GM12878 (cell line): ENCODE measurements at regions of chr10 and their contacts with region 1.

Region 1: DNA sequence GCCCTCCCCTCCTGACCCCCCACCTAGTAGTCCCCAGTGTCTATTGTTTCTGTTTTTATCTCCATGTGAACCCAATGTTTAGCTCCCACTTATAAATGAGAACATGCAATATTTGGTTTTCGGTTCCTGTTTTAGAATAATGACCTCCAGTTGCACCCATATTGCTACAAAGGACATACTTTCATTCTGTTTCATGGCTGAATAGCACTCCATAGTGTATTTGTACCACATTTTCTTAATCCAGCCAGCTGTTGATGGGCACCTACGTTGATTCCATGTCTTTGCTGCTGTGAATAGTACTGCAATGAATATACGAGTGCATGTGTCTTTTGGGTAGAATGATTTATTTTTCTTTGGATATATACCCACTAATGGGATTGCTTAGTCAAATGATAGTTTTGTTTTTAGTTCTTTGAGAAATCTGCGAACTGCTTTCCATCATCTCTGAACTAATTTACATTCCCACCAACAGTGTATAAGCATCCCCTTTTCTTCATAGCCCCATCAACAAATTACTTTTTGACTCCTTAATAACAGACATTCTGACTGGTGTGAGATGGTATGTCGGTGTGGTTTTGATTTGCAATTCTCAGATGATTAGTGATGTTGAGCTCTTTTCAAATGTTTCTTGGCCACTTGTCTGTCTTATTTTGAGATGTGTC is 128.4 kb upstream of the PHYHIPL start:
- DNase-seq: peak; percentile 84
- ATAC-seq: peak; percentile 90
- H3K4me3 ChIP-seq: peak overlapping the region; percentile 33; the same call in 1 of the 2 replicates
- H3K27ac ChIP-seq: peak overlapping the region; percentile 65
- H3K4me1 ChIP-seq: peaks cover 15% of the 10 kb centered on the region
- H3K27me3 ChIP-seq: no peaks in the 10 kb centered on the region; a peak in 1 of 4 replicates
- CTCF ChIP-seq: no peak
- EP300 ChIP-seq: peak; percentile 68 to 97
- POLR2A ChIP-seq: no peak
- RAD21 ChIP-seq: peak; percentile 27; the same call in 1 of the 2 replicates

Region 2: DNA sequence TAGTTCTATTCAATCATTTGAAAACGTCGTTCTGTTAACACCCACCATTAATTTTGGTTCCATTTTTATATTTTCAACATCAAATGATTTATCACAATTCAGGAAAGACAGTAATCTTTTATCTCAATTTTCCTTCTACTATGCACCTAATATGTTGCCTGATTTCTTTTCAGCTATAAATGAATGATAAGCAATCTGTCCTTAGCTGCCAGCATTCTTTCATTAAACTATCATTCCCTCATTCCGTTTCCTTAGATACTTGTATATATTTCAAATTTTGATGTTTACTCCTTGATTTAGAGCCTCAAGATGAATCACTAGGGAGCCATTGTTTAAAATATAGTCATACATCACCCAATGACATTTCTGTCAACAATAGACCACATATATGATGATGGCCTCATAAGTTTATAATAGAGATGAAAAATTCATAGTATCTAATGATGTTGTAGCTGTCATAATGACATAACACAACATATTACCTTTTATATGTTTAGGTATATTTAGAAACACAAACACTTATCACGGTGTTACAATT is 1442.1 kb before region 1 on chr10:
- CTCF ChIA-PET with region 1: no interaction called
- POLR2A ChIA-PET with region 1: no interaction called
- RAD21 ChIA-PET with region 1: no interaction called
- SMC1A ChIA-PET with region 1: no interaction called
- in situ Hi-C with region 1: no loop called
- intact Hi-C with region 1: no loop called
- DNase-seq: no peak
- ATAC-seq: no peak
- H3K4me3 ChIP-seq: no peak overlapping the region
- H3K27ac ChIP-seq: no peak overlapping the region
- H3K4me1 ChIP-seq: no peaks in the 10 kb centered on the region
- H3K27me3 ChIP-seq: no peaks in the 10 kb centered on the region
- CTCF ChIP-seq: no peak
- EP300 ChIP-seq: no peak
- POLR2A ChIP-seq: no peak
- RAD21 ChIP-seq: no peak

Region 3: GRCh38 chr10:58967551-58968388 is 80.3 kb before region 1 on chr10:
- CTCF ChIA-PET with region 1: interaction called, 5 read pairs
- POLR2A ChIA-PET with region 1: no interaction called
- RAD21 ChIA-PET with region 1: interaction called, 11 read pairs
- SMC1A ChIA-PET with region 1: interaction called, 14 read pairs
- in situ Hi-C with region 1: no loop called
- intact Hi-C with region 1: loop called (anchors 5 kb)
- DNase-seq: no peak
- ATAC-seq: peak; percentile 88
- H3K4me3 ChIP-seq: no peak overlapping the region
- H3K27ac ChIP-seq: no peak overlapping the region
- H3K4me1 ChIP-seq: no peaks in the 10 kb centered on the region
- H3K27me3 ChIP-seq: no peaks in the 10 kb centered on the region
- CTCF ChIP-seq: no peak
- EP300 ChIP-seq: no peak
- POLR2A ChIP-seq: no peak
- RAD21 ChIP-seq: no peak

Region 4: DNA sequence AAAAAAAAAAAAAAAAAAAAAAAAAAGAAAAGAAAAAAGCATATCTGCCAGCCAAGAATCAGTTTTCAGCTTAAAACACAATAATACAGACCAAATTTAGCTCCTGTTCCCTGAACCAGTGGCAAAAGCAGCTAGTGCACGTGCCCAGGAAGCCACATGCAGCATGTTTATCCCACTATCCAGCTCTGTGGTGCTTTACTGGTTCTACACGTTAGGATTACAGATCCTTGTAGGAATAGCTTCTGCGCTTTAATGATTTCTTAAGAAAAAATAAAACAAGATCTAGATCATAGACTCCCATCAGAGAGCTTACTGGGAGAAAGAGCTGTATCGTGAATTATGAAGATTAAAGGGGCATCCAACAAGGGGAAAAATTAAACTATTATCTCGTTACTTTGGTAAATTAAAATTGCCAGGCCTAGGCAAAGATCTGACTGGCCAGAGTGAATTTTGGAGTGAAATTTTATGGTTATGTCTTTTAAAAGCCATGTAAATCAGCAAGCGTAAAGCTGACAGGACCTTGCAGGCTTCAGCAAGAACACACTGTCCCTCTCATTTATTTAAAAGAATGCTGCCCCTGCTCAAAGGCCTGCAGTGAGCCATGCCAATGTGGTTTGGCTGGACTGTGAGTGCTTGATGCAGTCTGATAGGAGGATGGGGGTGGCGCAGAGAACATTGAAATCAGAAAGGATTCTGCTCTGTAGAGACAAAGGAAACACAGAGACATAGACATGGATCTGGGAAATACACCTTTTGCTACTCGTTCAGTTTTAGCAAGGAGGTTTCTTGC is 49.0 kb before region 1 on chr10:
- CTCF ChIA-PET with region 1: interaction called, 10 read pairs
- POLR2A ChIA-PET with region 1: interaction called, 11 read pairs
- RAD21 ChIA-PET with region 1: interaction called, 139 read pairs
- SMC1A ChIA-PET with region 1: interaction called, 104 read pairs
- in situ Hi-C with region 1: no loop called
- intact Hi-C with region 1: no loop called
- DNase-seq: no peak
- ATAC-seq: no peak
- H3K4me3 ChIP-seq: no peak overlapping the region
- H3K27ac ChIP-seq: no peak overlapping the region
- H3K4me1 ChIP-seq: peaks cover 36% of the 10 kb centered on the region
- H3K27me3 ChIP-seq: no peaks in the 10 kb centered on the region
- CTCF ChIP-seq: no peak
- EP300 ChIP-seq: no peak
- POLR2A ChIP-seq: no peak
- RAD21 ChIP-seq: no peak

Region 5: GRCh38 chr10:59036311-59037017 is 11.6 kb before region 1 on chr10:
- CTCF ChIA-PET with region 1: interaction called, 13 read pairs
- POLR2A ChIA-PET with region 1: interaction called, 9 read pairs
- RAD21 ChIA-PET with region 1: interaction called, 69 read pairs
- SMC1A ChIA-PET with region 1: interaction called, 56 read pairs
- in situ Hi-C with region 1: no loop called
- intact Hi-C with region 1: loop called (anchors 1 kb)
- DNase-seq: peak; percentile 55
- ATAC-seq: peak; percentile 99
- H3K4me3 ChIP-seq: 0 out of 2 replicates have a peak overlapping the region, but pooled peaks have one; percentile 20
- H3K27ac ChIP-seq: peak overlapping the region; percentile 39; the same call in 1 of the 2 replicates
- H3K4me1 ChIP-seq: peaks cover 13% of the 10 kb centered on the region
- H3K27me3 ChIP-seq: no peaks in the 10 kb centered on the region
- CTCF ChIP-seq: no peak
- EP300 ChIP-seq: peak in 1 of 2 experiments; percentile 71; a peak in 3 of 4 replicates
- POLR2A ChIP-seq: no peak
- RAD21 ChIP-seq: no peak

Region 6: DNA sequence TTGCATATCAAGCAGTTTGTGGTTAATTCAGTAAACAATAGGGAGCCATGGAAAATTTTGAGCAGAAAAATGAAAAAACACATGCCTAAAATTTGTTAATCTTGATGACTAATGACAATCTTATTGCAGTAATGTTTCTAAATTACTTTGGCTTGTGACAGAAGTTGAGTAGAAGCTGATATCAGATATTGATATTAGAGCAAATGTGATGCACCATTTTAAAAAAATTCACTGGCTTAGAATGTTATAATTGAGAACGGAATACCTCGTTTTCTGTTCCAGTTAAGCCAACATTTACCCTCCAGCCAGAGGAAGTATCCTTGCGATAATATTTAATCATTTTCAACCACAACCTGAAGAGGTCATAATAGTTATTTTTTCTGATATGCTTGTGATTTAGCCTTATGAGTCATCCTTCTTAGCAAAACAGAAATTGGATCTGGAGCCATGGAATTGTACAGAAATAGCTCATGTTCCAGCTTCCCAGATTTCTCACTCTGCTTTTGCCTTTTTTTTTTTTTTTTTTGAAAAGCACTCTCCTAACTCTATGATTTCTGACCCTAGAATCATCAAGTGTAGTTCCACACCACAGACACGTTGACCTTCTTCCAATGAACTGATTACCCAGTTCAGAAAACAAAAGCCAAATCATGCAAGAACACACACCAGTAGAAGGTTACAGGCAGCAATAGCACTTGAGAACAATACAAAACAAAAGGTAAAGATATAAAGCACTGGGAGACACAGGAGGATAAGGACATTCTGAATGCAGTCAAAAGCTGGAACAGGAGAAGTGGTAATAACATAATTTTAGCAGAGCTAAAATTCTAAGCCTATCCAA is 31.5 kb after region 1 on chr10:
- CTCF ChIA-PET with region 1: interaction called, 3 read pairs
- POLR2A ChIA-PET with region 1: interaction called, 13 read pairs
- RAD21 ChIA-PET with region 1: interaction called, 13 read pairs
- SMC1A ChIA-PET with region 1: interaction called, 16 read pairs
- in situ Hi-C with region 1: no loop called
- intact Hi-C with region 1: no loop called
- DNase-seq: no peak
- ATAC-seq: no peak
- H3K4me3 ChIP-seq: no peak overlapping the region
- H3K27ac ChIP-seq: no peak overlapping the region
- H3K4me1 ChIP-seq: 0 out of 2 replicates have a peak, but pooled peaks cover 3% of the 10 kb centered on the region
- H3K27me3 ChIP-seq: no peaks in the 10 kb centered on the region
- CTCF ChIP-seq: no peak
- EP300 ChIP-seq: no peak
- POLR2A ChIP-seq: no peak
- RAD21 ChIP-seq: no peak

Region 7: DNA sequence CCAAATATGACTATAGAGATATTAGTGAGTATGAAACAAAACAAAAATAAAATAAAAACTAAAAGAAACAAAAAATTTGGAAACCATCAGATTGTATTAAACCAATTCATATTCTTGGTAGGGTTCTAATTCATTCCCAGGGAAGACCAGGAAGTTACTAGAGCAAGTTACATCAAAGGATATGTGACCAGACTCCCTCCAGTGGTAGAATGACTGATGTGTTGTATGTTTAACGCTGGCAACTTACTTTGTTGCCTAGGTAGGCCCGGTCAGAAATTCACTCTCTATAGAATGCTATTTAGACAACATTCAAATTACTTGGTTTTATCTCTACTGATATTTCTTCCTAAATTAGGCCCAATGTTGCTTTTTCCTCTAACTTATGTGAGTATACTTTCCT is 133.6 kb after region 1 on chr10:
- CTCF ChIA-PET with region 1: interaction called, 9 read pairs
- POLR2A ChIA-PET with region 1: no interaction called
- RAD21 ChIA-PET with region 1: interaction called, 20 read pairs
- SMC1A ChIA-PET with region 1: interaction called, 19 read pairs
- in situ Hi-C with region 1: no loop called
- intact Hi-C with region 1: loop called (anchors 1 kb)
- DNase-seq: peak; percentile 17
- ATAC-seq: peak; percentile 90
- H3K4me3 ChIP-seq: no peak overlapping the region
- H3K27ac ChIP-seq: no peak overlapping the region
- H3K4me1 ChIP-seq: no peaks in the 10 kb centered on the region
- H3K27me3 ChIP-seq: peaks cover 0 to 4% of the 10 kb centered on the region in 2 experiments; a peak in 1 of 4 replicates
- CTCF ChIP-seq: peak; percentile 37 to 67 (median 55); a peak in 5 of 6 replicates
- EP300 ChIP-seq: no peak
- POLR2A ChIP-seq: no peak
- RAD21 ChIP-seq: peak; percentile 80